ENCODE measurements at regions of chr17 and their contacts with region 1.

Region 1: DNA sequence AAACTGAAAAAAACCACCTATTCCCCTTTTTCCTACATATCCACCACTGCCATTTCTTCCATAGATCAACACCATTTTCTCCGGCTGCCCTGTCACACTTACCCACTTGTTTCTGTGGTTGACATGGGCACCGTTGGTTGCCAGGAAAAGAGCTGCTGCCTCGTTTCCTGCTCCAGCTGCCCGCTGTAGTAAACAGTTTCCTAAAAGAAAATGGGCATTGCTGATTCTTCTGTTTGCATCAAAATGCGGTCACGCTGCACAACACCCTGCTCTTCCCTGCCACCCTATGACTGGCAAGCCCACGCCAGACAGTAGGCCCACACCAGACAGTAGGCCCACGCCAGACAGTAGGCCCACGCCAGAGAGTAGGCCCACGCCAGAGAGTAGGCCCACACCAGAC is 46.3 kb downstream of the CYB5D2 start:
- DNase-seq: no peak
- ATAC-seq: no peak
- H3K4me3 Mint-ChIP-seq: no peak overlapping the region
- H3K27ac Mint-ChIP-seq: peak overlapping the region; percentile 76
- H3K4me1 Mint-ChIP-seq: peaks cover 8% of the 10 kb centered on the region
- H3K27me3 Mint-ChIP-seq: no peaks in the 10 kb centered on the region

Region 2: GRCh38 chr17:4130715-4131114 is 58.6 kb before region 1 on chr17:
- CTCF ChIA-PET with region 1: no interaction called
- POLR2A ChIA-PET with region 1: interaction called, 11 read pairs
- intact Hi-C with region 1: no loop called
- DNase-seq: no peak
- ATAC-seq: peak; percentile 44
- H3K4me3 Mint-ChIP-seq: no peak overlapping the region
- H3K27ac Mint-ChIP-seq: peak overlapping the region; percentile 27
- H3K4me1 Mint-ChIP-seq: peaks cover 39% of the 10 kb centered on the region
- H3K27me3 Mint-ChIP-seq: no peaks in the 10 kb centered on the region